ENCODE measurements at regions of chr10 and their contacts with region 1.

Region 1: DNA sequence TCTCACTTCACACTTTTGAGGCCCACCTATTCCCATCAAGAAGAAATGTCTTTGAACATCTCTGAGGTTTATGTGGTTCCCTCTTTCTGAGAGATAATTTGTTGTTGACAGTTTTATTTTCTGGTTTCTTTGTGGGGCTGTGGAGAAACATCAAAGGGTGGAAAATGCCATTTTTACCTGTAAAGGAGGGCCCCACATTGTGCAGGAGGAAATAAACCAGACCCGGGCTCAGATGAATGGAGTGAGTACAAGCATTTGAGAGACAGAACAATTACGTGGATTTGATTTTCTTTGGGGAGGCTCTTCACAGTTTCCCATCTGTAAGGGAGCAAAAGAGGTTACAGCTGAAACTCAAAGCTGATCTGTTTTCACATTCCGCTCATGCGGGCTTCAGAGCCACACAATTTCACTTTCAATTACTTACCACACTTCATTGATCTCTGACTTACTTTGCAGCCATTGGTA is 29.8 kb downstream of the ITPRIP start:
- DNase-seq: peak; percentile 59
- ATAC-seq: peak; percentile 78
- H3K4me3 Mint-ChIP-seq: peak overlapping the region; percentile 49
- H3K27ac Mint-ChIP-seq: peak overlapping the region; percentile 87
- H3K4me1 Mint-ChIP-seq: peaks cover 79% of the 10 kb centered on the region
- H3K27me3 Mint-ChIP-seq: peaks cover 4% of the 10 kb centered on the region

Region 2: GRCh38 chr10:104268716-104269645 is 39.5 kb before region 1 on chr10 and contains the start of gene GSTO2:
- CTCF ChIA-PET with region 1: interaction called, 85 read pairs
- POLR2A ChIA-PET with region 1: interaction called, 3 read pairs
- DNase-seq: peak; percentile 99
- ATAC-seq: peak; percentile 99
- H3K4me3 Mint-ChIP-seq: peak within 1 kb of the TSS; percentile 87
- H3K27ac Mint-ChIP-seq: peak within 1 kb of the TSS; percentile 86
- H3K4me1 Mint-ChIP-seq: peaks cover 48% of the 10 kb centered on the region
- H3K27me3 Mint-ChIP-seq: peaks cover under 1% of the 10 kb centered on the region
- total RNA-seq, gene GSTO2: 0.94 to 1.2 TPM

Region 3: DNA sequence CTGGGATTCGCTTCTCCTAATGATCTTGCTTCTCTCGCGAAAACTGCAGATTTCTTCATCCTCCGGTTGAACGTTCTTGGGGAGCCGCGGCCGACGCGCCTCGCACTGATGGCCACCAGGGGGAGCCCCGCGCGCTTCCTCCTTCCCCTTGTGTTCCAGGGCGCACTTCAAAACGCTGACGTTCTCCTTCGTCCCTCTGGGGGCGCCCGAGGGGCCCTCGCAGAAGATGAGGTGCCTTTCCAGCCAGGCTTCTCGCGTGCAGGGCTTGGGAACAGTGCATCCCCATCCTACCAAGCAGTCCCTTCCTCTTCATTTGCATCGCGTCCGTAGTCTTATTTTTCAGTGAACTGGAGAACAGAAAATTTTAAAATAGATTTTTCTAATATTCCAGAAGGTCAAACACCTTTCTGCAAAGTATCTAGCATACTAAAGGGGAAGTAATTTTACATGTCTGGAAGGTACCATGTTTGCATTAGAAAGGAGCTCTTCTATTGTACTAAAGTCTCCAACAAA is 17.0 kb before region 1 on chr10:
- CTCF ChIA-PET with region 1: interaction called, 171 read pairs
- POLR2A ChIA-PET with region 1: interaction called, 3 read pairs
- DNase-seq: peak; percentile 93
- ATAC-seq: peak; percentile 98
- H3K4me3 Mint-ChIP-seq: no peak overlapping the region
- H3K27ac Mint-ChIP-seq: no peak overlapping the region
- H3K4me1 Mint-ChIP-seq: peaks cover 13% of the 10 kb centered on the region
- H3K27me3 Mint-ChIP-seq: peaks cover 32% of the 10 kb centered on the region

Region 4: GRCh38 chr10:104322416-104322782 is 13.9 kb after region 1 on chr10:
- CTCF ChIA-PET with region 1: interaction called, 41 read pairs
- POLR2A ChIA-PET with region 1: interaction called, 7 read pairs
- DNase-seq: peak; percentile 65
- ATAC-seq: peak; percentile 54
- H3K4me3 Mint-ChIP-seq: peak overlapping the region; percentile 61
- H3K27ac Mint-ChIP-seq: peak overlapping the region; percentile 91
- H3K4me1 Mint-ChIP-seq: peaks cover 93% of the 10 kb centered on the region
- H3K27me3 Mint-ChIP-seq: no peaks in the 10 kb centered on the region

Region 5: GRCh38 chr10:104328896-104329710 is 20.6 kb after region 1 on chr10:
- CTCF ChIA-PET with region 1: interaction called, 37 read pairs
- POLR2A ChIA-PET with region 1: interaction called, 4 read pairs
- DNase-seq: peak; percentile 79
- ATAC-seq: peak; percentile 69
- H3K4me3 Mint-ChIP-seq: peak overlapping the region; percentile 55
- H3K27ac Mint-ChIP-seq: peak overlapping the region; percentile 91
- H3K4me1 Mint-ChIP-seq: peaks cover 98% of the 10 kb centered on the region
- H3K27me3 Mint-ChIP-seq: no peaks in the 10 kb centered on the region

Region 6: GRCh38 chr10:104337974-104338735 is 29.7 kb after region 1 on chr10 and contains the start of gene ITPRIP:
- CTCF ChIA-PET with region 1: interaction called, 45 read pairs
- POLR2A ChIA-PET with region 1: interaction called, 50 read pairs
- DNase-seq: peak; percentile 82
- ATAC-seq: peak; percentile 79
- H3K4me3 Mint-ChIP-seq: peak within 1 kb of the TSS; percentile 94
- H3K27ac Mint-ChIP-seq: peak within 1 kb of the TSS; percentile 100
- H3K4me1 Mint-ChIP-seq: peaks cover 49% of the 10 kb centered on the region
- H3K27me3 Mint-ChIP-seq: peaks cover 10% of the 10 kb centered on the region
- total RNA-seq, gene ITPRIP: 26.6 to 27.1 TPM